ENCODE measurements at regions of chr11 and their contacts with region 1.

Region 1: GRCh38 chr11:19441752-19442553 is 201.2 kb upstream of the E2F8 start:
- DNase-seq: peak; percentile 84
- H3K4me3 Mint-ChIP-seq: peak overlapping the region; percentile 49
- H3K27ac Mint-ChIP-seq: peak overlapping the region; percentile 69
- H3K4me1 Mint-ChIP-seq: peaks cover 54% of the 10 kb centered on the region
- H3K27me3 Mint-ChIP-seq: peaks cover 10% of the 10 kb centered on the region
- CTCF ChIP-seq: no peak

Region 2: GRCh38 chr11:19164230-19164855 is 277.6 kb before region 1 on chr11:
- CTCF ChIA-PET with region 1: no interaction called
- intact Hi-C with region 1: no loop called
- DNase-seq: no peak
- H3K4me3 Mint-ChIP-seq: no peak overlapping the region
- H3K27ac Mint-ChIP-seq: no peak overlapping the region
- H3K4me1 Mint-ChIP-seq: peaks cover 13% of the 10 kb centered on the region
- H3K27me3 Mint-ChIP-seq: no peaks in the 10 kb centered on the region
- CTCF ChIP-seq: no peak

Region 3: GRCh38 chr11:19370100-19370861 is 71.7 kb before region 1 on chr11:
- CTCF ChIA-PET with region 1: no interaction called
- intact Hi-C with region 1: loop called (anchors 5 kb)
- DNase-seq: peak; percentile 70
- H3K4me3 Mint-ChIP-seq: peak overlapping the region; percentile 5
- H3K27ac Mint-ChIP-seq: peak overlapping the region; percentile 59
- H3K4me1 Mint-ChIP-seq: peaks cover 14% of the 10 kb centered on the region
- H3K27me3 Mint-ChIP-seq: peaks cover 61% of the 10 kb centered on the region
- CTCF ChIP-seq: no peak